H1 (cell line): ENCODE measurements at regions of chr12 and their contacts with region 1.

Region 1: GRCh38 chr12:120944645-120945231 is 33.6 kb upstream of the HNF1A start:
- DNase-seq: peak; percentile 36 to 90
- H3K4me3 ChIP-seq: no peak overlapping the region
- H3K27ac ChIP-seq: no peak overlapping the region
- H3K4me1 ChIP-seq: no peaks in the 10 kb centered on the region
- H3K27me3 ChIP-seq: no peaks in the 10 kb centered on the region
- CTCF ChIP-seq: peak; percentile 64 to 73 (median 73)
- EP300 ChIP-seq: no peak
- POLR2A ChIP-seq: no peak
- RAD21 ChIP-seq: peak; percentile 42 to 63

Region 2: GRCh38 chr12:120771097-120771496 is 173.6 kb before region 1 on chr12:
- CTCF ChIA-PET with region 1: no interaction called
- POLR2A ChIA-PET with region 1: no interaction called
- DNase-seq: no peak
- H3K4me3 ChIP-seq: no peak overlapping the region
- H3K27ac ChIP-seq: no peak overlapping the region
- H3K4me1 ChIP-seq: peaks cover 0 to 3% (median 0%) of the 10 kb centered on the region in 4 experiments; a peak in 1 of 7 replicates
- H3K27me3 ChIP-seq: no peaks in the 10 kb centered on the region
- CTCF ChIP-seq: no peak
- EP300 ChIP-seq: no peak
- POLR2A ChIP-seq: no peak
- RAD21 ChIP-seq: no peak

Region 3: GRCh38 chr12:120820885-120821510 is 123.7 kb before region 1 on chr12:
- CTCF ChIA-PET with region 1: no interaction called
- POLR2A ChIA-PET with region 1: no interaction called
- DNase-seq: no peak
- H3K4me3 ChIP-seq: no peak overlapping the region
- H3K27ac ChIP-seq: no peak overlapping the region
- H3K4me1 ChIP-seq: peaks cover 0 to 7% (median 3%) of the 10 kb centered on the region in 4 experiments; a peak in 2 of 7 replicates
- H3K27me3 ChIP-seq: no peaks in the 10 kb centered on the region
- CTCF ChIP-seq: no peak
- EP300 ChIP-seq: no peak
- POLR2A ChIP-seq: no peak
- RAD21 ChIP-seq: no peak

Region 4: DNA sequence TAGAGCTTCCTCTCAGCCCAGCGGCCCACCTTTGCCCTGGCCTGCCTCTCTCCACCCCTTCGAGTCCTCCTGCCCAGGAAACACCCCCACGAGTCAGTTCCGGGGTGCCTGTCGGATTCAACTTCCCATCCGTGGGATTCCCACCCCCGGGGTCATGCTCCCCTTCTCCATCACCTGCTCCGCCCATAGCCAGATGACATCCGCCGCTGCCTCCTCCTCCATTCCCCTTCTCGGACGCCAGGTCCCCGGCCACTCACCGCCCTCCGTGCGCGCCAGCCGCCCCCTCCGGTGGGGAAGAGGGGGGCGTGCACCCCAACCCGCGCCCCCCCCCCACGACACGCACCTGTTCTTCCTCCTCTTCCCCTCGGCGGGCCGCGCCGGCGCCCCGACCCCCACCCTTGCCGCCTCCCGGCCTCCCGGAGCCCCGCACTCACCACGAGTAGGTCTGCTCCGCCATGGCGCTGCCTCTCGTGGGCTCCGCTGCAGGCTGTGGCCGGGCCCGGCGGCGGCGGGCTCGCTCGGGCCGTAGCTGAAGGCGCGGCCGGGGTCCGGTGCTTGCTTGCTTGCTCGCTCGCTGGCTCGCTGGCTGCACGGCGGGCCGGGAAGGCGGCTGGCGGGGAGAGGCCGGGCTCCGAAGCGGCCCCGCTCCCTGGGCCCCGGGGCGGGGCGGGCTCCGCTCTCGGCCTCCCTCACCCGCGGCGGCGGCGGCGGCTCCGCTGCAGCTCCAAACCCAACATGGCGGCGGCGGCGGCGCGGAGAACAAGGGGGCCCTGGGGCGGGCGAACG is 41.1 kb before region 1 on chr12:
- CTCF ChIA-PET with region 1: interaction called, 12 read pairs
- POLR2A ChIA-PET with region 1: interaction called, 3 read pairs
- DNase-seq: peak in 1 of 2 experiments; percentile 63
- H3K4me3 ChIP-seq: peak overlapping the region; percentile 63 to 86 (median 76)
- H3K27ac ChIP-seq: peak overlapping the region; percentile 82; the same call in 1 of the 2 replicates
- H3K4me1 ChIP-seq: peaks cover 0 to 3% (median 0%) of the 10 kb centered on the region in 4 experiments; a peak in 4 of 7 replicates
- H3K27me3 ChIP-seq: no peaks in the 10 kb centered on the region
- CTCF ChIP-seq: no peak
- EP300 ChIP-seq: no peak
- POLR2A ChIP-seq: no peak
- RAD21 ChIP-seq: no peak

Region 5: GRCh38 chr12:120955232-120955631 is 10.5 kb after region 1 on chr12:
- CTCF ChIA-PET with region 1: interaction called, 17 read pairs
- POLR2A ChIA-PET with region 1: no interaction called
- DNase-seq: no peak
- H3K4me3 ChIP-seq: no peak overlapping the region
- H3K27ac ChIP-seq: no peak overlapping the region
- H3K4me1 ChIP-seq: no peaks in the 10 kb centered on the region
- H3K27me3 ChIP-seq: no peaks in the 10 kb centered on the region
- CTCF ChIP-seq: no peak
- EP300 ChIP-seq: no peak
- POLR2A ChIP-seq: no peak
- RAD21 ChIP-seq: no peak